ENCODE measurements at regions of chr1 and their contacts with region 1.

Region 1: GRCh38 chr1:41161846-41162245 is 80.3 kb downstream of the SCMH1 start:
- DNase-seq: peak in 1 of 6 donors; percentile 37
- ATAC-seq: no peak
- H3K4me3 ChIP-seq: no peak overlapping the region
- H3K27ac ChIP-seq: no peak overlapping the region
- H3K4me1 ChIP-seq: no peaks in the 10 kb centered on the region
- H3K27me3 ChIP-seq: no peaks in the 10 kb centered on the region
- CTCF ChIP-seq: no peak

Region 2: DNA sequence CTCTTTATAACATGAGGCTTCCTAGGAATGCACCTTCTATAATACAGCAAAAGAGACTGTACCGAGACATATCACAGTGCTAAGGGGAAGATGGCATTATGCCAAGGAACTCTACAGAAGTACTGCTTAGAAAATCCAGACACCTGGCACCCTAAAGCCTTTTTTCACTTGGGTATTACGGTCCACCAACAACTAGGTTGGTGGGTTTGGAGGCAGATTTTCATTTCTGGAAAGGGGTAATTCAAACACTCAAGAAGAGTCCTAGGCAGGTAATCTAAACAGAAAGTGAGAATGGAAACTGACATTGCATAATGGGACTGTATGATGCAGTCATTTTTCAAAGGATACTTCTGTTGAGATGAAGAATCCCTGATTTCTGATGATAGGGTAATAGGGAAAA is 60.6 kb after region 1 on chr1:
- intact Hi-C with region 1: loop called in 1 of 3 experiments (anchors 10 kb)
- DNase-seq: no peak
- ATAC-seq: peak in 3 of 4 donors; percentile 67 to 81 (median 73)
- H3K4me3 ChIP-seq: no peak overlapping the region
- H3K27ac ChIP-seq: no peak overlapping the region
- H3K4me1 ChIP-seq: peaks cover 10 to 26% (median 23%) of the 10 kb centered on the region in 3 donors
- H3K27me3 ChIP-seq: no peaks in the 10 kb centered on the region
- CTCF ChIP-seq: no peak

Measured in pancreas (tissue), 10 donors.